Activated CD8-positive, alpha-beta T cell treated with anti-CD3 and anti-CD28 coated beads, Interleukin-2, amount 10 ng/mL, durations not matched to agents 7 days and 5 days (primary cell): ENCODE measurements at regions of chr14 and their contacts with region 1.

Region 1: GRCh38 chr14:50860478-50861086 is 11.3 kb upstream of the ABHD12B start:
- DNase-seq: peak; percentile 93
- ATAC-seq: peak; percentile 67
- H3K4me3 Mint-ChIP-seq: peak overlapping the region; percentile 84
- H3K27ac Mint-ChIP-seq: peak overlapping the region; percentile 88
- H3K4me1 Mint-ChIP-seq: peaks cover 18% of the 10 kb centered on the region
- H3K27me3 Mint-ChIP-seq: peaks cover 14% of the 10 kb centered on the region

Region 2: GRCh38 chr14:50542941-50543418 is 317.6 kb before region 1 on chr14:
- CTCF ChIA-PET with region 1: interaction called, 10 read pairs
- POLR2A ChIA-PET with region 1: no interaction called
- DNase-seq: peak; percentile 63
- ATAC-seq: peak; percentile 81
- H3K4me3 Mint-ChIP-seq: no peak overlapping the region
- H3K27ac Mint-ChIP-seq: no peak overlapping the region
- H3K4me1 Mint-ChIP-seq: peaks cover 10% of the 10 kb centered on the region
- H3K27me3 Mint-ChIP-seq: peaks cover 7% of the 10 kb centered on the region

Region 3: GRCh38 chr14:50714450-50715073 is 146.0 kb before region 1 on chr14:
- CTCF ChIA-PET with region 1: interaction called, 15 read pairs
- POLR2A ChIA-PET with region 1: no interaction called
- DNase-seq: no peak
- ATAC-seq: peak; percentile 64
- H3K4me3 Mint-ChIP-seq: no peak overlapping the region
- H3K27ac Mint-ChIP-seq: no peak overlapping the region
- H3K4me1 Mint-ChIP-seq: no peaks in the 10 kb centered on the region
- H3K27me3 Mint-ChIP-seq: peaks cover 7% of the 10 kb centered on the region

Region 4: DNA sequence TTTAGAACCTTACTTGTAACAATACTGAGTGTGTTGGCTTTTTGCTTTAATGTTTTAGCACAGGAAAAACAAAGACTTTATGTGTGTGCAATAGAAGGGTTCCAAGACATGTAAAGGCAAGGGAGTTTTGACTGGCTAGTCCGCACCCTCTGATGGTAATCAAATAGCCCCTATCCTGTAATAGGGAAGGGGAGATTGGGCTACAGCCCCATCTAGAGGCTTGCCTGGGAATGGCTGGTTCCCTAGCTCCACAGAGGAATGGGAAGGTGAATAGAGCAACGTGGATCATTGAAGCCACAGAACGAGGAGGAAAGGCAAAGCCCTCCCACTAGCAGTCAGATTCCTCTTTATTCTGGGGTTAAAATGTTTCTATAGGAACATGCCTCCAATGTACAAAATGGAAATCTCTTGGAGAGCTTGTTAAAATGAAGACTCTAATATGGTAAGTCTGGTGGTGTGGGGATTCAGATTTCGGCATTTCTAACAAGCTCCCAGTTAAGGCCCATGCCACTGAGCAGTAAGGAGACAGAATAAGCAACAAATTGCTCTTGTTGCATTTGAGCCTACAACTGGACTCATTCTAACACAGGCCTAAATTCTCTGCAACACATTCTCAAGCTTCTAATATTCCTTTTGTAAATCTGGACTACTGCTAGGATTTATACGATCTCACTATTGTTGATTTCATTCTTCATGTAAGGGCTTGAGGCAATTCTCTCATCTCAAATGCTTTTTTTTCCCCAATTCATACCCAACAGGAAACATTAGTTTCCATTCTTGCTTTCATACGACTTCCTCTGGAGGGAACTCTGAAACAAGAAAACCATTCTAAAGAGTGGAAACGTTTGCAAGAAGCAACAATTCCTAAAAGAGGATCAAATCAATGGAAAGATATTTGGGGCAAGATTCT is 86.7 kb before region 1 on chr14:
- CTCF ChIA-PET with region 1: interaction called, 148 read pairs
- POLR2A ChIA-PET with region 1: interaction called, 5 read pairs
- DNase-seq: no peak
- ATAC-seq: peak; percentile 51
- H3K4me3 Mint-ChIP-seq: no peak overlapping the region
- H3K27ac Mint-ChIP-seq: peak overlapping the region; percentile 58
- H3K4me1 Mint-ChIP-seq: peaks cover 21% of the 10 kb centered on the region
- H3K27me3 Mint-ChIP-seq: no peaks in the 10 kb centered on the region

Region 5: GRCh38 chr14:50813544-50813863 is 47.1 kb before region 1 on chr14:
- CTCF ChIA-PET with region 1: interaction called, 25 read pairs
- POLR2A ChIA-PET with region 1: interaction called, 4 read pairs
- DNase-seq: peak; percentile 44
- ATAC-seq: peak; percentile 83
- H3K4me3 Mint-ChIP-seq: peak overlapping the region; percentile 72
- H3K27ac Mint-ChIP-seq: peak overlapping the region; percentile 92
- H3K4me1 Mint-ChIP-seq: peaks cover 48% of the 10 kb centered on the region
- H3K27me3 Mint-ChIP-seq: no peaks in the 10 kb centered on the region

Region 6: GRCh38 chr14:50839048-50839447 is 21.5 kb before region 1 on chr14:
- CTCF ChIA-PET with region 1: interaction called, 204 read pairs
- POLR2A ChIA-PET with region 1: interaction called, 6 read pairs
- DNase-seq: peak; percentile 33
- ATAC-seq: peak; percentile 59
- H3K4me3 Mint-ChIP-seq: no peak overlapping the region
- H3K27ac Mint-ChIP-seq: peak overlapping the region; percentile 17
- H3K4me1 Mint-ChIP-seq: peaks cover 41% of the 10 kb centered on the region
- H3K27me3 Mint-ChIP-seq: no peaks in the 10 kb centered on the region